ENCODE measurements at regions of chr13 and their contacts with region 1.

Region 1: DNA sequence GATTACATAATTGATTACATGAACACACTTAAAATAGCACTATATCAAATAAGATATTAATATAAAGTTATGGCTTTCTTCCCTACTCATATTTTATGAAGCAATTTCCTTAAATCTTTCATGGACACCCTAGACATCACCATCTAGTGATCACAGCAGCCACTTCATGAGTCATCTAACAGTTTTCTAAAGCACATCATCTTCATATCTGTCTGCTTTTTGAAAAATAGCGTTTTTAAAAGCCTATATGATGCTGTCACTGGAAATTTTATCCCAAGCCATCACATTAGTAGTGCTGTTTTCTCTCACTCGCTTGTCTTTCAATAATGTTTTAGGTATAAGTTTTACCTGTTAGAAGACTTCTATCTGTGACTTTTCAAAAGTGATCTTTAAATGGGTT is 326.1 kb downstream of the SLITRK6 start:
- DNase-seq: no peak
- ATAC-seq: no peak
- H3K4me3 ChIP-seq: no peak overlapping the region
- H3K27ac ChIP-seq: no peak overlapping the region
- H3K4me1 ChIP-seq: no peaks in the 10 kb centered on the region
- H3K27me3 ChIP-seq: no peaks in the 10 kb centered on the region
- CTCF ChIP-seq: no peak

Region 2: GRCh38 chr13:85303630-85304029 is 169.5 kb before region 1 on chr13:
- CTCF ChIA-PET with region 1: no interaction called
- POLR2A ChIA-PET with region 1: no interaction called
- intact Hi-C with region 1: no loop called
- DNase-seq: no peak
- ATAC-seq: no peak
- H3K4me3 ChIP-seq: no peak overlapping the region
- H3K27ac ChIP-seq: no peak overlapping the region
- H3K4me1 ChIP-seq: no peaks in the 10 kb centered on the region
- H3K27me3 ChIP-seq: no peaks in the 10 kb centered on the region
- CTCF ChIP-seq: no peak

Region 3: GRCh38 chr13:85332615-85333014 is 140.5 kb before region 1 on chr13:
- CTCF ChIA-PET with region 1: interaction called, 17 read pairs
- POLR2A ChIA-PET with region 1: no interaction called
- intact Hi-C with region 1: no loop called
- DNase-seq: peak; percentile 10
- ATAC-seq: peak; percentile 27; the same call in 1 of the 2 replicates
- H3K4me3 ChIP-seq: no peak overlapping the region
- H3K27ac ChIP-seq: no peak overlapping the region
- H3K4me1 ChIP-seq: no peaks in the 10 kb centered on the region; the same call in 1 of the 2 replicates
- H3K27me3 ChIP-seq: no peaks in the 10 kb centered on the region
- CTCF ChIP-seq: no peak

Region 4: GRCh38 chr13:85508683-85509329 is 35.7 kb after region 1 on chr13:
- CTCF ChIA-PET with region 1: no interaction called
- POLR2A ChIA-PET with region 1: no interaction called
- intact Hi-C with region 1: no loop called
- DNase-seq: no peak
- ATAC-seq: peak; percentile 31
- H3K4me3 ChIP-seq: no peak overlapping the region
- H3K27ac ChIP-seq: peak overlapping the region; percentile 61
- H3K4me1 ChIP-seq: peaks cover 47% of the 10 kb centered on the region
- H3K27me3 ChIP-seq: no peaks in the 10 kb centered on the region
- CTCF ChIP-seq: no peak; the same call in 1 of the 2 replicates

Measured in PC-3 (cell line).